ENCODE measurements at regions of chr4 and their contacts with region 1.

Region 1: GRCh38 chr4:6974138-6974848 is 64.7 kb downstream of the TBC1D14 start:
- DNase-seq: peak; percentile 90
- ATAC-seq: peak; percentile 99
- H3K4me3 Mint-ChIP-seq: no peak overlapping the region
- H3K27ac Mint-ChIP-seq: no peak overlapping the region
- H3K4me1 Mint-ChIP-seq: peaks cover 9% of the 10 kb centered on the region
- H3K27me3 Mint-ChIP-seq: no peaks in the 10 kb centered on the region
- CTCF ChIP-seq: peak; percentile 94

Region 2: DNA sequence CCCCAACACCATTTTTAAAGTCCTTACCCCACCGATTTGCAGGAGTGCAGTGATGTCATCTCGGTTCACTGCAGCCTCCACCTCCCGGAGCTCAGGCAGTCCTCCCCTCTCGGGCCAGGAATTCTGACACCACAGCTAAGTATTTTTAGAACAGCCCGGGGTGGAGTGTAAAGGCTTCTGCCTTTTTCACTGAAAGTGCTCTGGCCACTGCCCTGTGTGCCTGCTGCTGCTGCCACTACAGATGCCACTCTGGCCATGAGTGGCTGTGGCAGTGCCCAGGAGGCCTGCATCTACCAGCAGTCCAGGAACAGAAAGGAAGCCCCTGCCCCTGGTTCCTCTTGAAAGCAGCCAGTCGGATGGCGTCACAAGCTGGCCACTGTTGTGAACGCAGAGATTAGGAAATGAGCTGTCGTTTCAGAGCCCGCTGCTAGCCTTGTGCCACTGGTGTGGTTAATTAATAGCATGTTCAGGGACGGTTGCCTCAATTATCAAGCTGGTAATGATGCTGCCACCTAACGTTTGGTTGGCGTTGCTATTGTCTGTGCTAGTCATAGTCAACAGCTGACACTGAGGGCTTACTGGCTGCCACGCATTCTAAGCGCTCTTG is 88.2 kb before region 1 on chr4:
- CTCF ChIA-PET with region 1: no interaction called
- POLR2A ChIA-PET with region 1: no interaction called
- intact Hi-C with region 1: no loop called
- DNase-seq: peak; percentile 48
- ATAC-seq: peak; percentile 78
- H3K4me3 Mint-ChIP-seq: no peak overlapping the region
- H3K27ac Mint-ChIP-seq: no peak overlapping the region
- H3K4me1 Mint-ChIP-seq: peaks cover 2% of the 10 kb centered on the region
- H3K27me3 Mint-ChIP-seq: no peaks in the 10 kb centered on the region
- CTCF ChIP-seq: peak; percentile 33

Region 3: DNA sequence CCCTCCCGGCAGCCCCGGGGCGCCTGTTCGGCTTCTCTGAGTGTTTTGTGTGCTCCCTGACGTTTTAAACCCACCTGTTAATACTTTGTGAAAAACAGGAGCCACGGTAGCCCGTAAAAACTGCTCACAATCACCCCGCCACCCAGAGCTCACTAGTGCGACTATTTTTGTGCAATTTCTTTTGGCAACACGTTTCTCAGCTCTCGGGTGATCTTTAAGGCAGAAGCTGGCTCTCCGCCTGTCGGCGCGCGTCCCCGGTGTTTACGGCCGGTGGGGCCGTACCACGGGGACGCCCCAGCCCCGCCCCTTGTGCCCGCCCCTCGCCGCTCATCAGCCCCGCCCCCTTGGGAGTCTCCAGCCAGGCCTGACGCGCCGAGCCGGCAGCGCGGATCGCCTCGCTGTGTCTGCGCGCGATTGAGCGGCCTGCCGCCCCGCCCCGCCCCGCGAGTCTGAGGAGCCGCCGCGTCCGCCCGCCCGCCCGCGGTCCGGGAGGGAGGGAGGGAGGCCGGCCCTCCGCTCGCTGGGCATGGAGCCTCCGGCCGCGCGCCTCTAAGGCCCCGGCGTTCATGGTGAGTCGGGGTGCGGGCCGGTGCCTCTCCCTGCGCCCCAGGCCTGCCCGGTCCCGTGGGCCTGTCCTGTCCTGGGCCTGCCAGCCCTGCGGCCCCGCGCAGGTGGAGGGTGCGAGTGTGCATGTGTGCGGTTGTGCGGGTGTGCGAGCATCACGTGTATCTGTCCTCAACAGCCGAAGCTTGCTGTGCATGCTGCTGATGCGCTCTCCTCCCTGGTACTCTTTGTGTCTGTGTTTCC is 12.7 kb after region 1 on chr4:
- CTCF ChIA-PET with region 1: interaction called, 20 read pairs
- POLR2A ChIA-PET with region 1: no interaction called
- intact Hi-C with region 1: no loop called
- DNase-seq: peak; percentile 94
- ATAC-seq: peak; percentile 97
- H3K4me3 Mint-ChIP-seq: peak overlapping the region; percentile 86
- H3K27ac Mint-ChIP-seq: peak overlapping the region; percentile 92
- H3K4me1 Mint-ChIP-seq: peaks cover 66% of the 10 kb centered on the region
- H3K27me3 Mint-ChIP-seq: no peaks in the 10 kb centered on the region
- CTCF ChIP-seq: no peak

Region 4: DNA sequence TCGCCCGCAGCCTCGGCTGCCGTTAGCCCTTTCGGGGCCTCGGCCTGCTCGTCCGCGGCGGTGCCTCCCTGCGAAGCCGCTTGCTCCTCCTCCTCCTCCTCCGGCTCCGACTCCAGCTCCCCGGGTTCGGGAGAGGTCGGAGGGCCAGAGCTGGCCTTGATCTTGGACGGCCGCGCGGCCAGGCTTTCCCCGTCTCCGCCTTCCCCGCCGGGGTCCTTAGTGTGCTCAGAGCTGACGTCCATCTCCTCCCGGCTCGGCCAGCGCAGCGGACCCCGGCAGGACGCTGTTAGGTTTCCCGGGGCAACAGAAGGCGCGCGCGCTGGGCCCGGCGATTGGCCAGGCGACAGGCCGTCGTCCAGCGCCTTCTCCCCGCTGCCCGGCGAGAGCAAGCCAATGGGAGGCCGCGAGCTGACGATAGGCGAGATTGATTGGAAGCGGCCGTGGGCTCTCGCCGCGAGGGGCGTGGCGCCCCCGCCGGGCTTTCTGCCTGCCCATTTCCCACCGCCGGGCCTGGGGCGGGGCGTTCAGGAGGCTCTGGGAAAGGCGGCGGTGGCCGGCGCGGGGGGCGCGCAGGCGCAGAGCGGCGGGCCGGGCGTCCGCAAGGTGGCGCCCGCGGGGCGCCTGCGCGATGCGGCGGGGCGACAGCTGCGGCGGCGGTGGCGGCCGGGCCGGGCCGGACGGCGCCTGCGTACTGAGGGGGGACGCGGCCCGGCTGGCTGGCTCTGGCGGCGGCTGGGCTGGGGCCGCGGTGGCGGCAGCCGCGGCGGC is 68.6 kb after region 1 on chr4 and contains the start of gene TADA2B:
- CTCF ChIA-PET with region 1: interaction called, 13 read pairs
- POLR2A ChIA-PET with region 1: no interaction called
- intact Hi-C with region 1: no loop called
- DNase-seq: peak; percentile 92
- ATAC-seq: peak; percentile 91
- H3K4me3 Mint-ChIP-seq: peak within 1 kb of the TSS; percentile 87
- H3K27ac Mint-ChIP-seq: peak within 1 kb of the TSS; percentile 73
- H3K4me1 Mint-ChIP-seq: peaks cover 46% of the 10 kb centered on the region
- H3K27me3 Mint-ChIP-seq: no peaks in the 10 kb centered on the region
- CTCF ChIP-seq: peak; percentile 14
- total RNA-seq, gene TADA2B: 7.7 to 10.0 TPM

Measured in activated CD8-positive, alpha-beta T cell treated with anti-CD3 and anti-CD28 coated beads for 36 hours (primary cell).